ENCODE measurements at regions of chr19 and their contacts with region 1.

Region 1: GRCh38 chr19:18571564-18572300 is at the start of gene UBA52:
- DNase-seq: peak; percentile 96
- H3K4me3 ChIP-seq: peak within 1 kb of the TSS; percentile 64 to 86
- H3K27ac ChIP-seq: peak within 1 kb of the TSS; percentile 74 to 76
- H3K4me1 ChIP-seq: peaks cover 10 to 16% of the 10 kb centered on the region in 2 experiments; a peak in 3 of 4 replicates
- H3K27me3 ChIP-seq: no peaks in the 10 kb centered on the region
- CTCF ChIP-seq: no peak
- EP300 ChIP-seq: no peak; a peak in 1 of 4 replicates
- RAD21 ChIP-seq: no peak
- polyA plus RNA-seq, gene UBA52: 2,690 and 3,026 TPM in 2 replicates

Region 2: GRCh38 chr19:18557474-18558201 is 14.1 kb before region 1 on chr19 and contains the start of gene KXD1:
- CTCF ChIA-PET with region 1: interaction called, 8 read pairs
- POLR2A ChIA-PET with region 1: interaction called, 14 read pairs
- DNase-seq: peak; percentile 97
- H3K4me3 ChIP-seq: peak within 1 kb of the TSS; percentile 78 to 85
- H3K27ac ChIP-seq: peak within 1 kb of the TSS; percentile 46 to 60
- H3K4me1 ChIP-seq: peaks cover 0 to 5% of the 10 kb centered on the region in 2 experiments; a peak in 1 of 4 replicates
- H3K27me3 ChIP-seq: no peaks in the 10 kb centered on the region
- CTCF ChIP-seq: no peak
- EP300 ChIP-seq: no peak
- RAD21 ChIP-seq: no peak
- polyA plus RNA-seq, gene KXD1: 151 and 165 TPM in 2 replicates

Measured in SK-N-SH (cell line).